ENCODE measurements at regions of chr19 and their contacts with region 1.

Region 1: GRCh38 chr19:39125554-39126311 is at the start of gene PAK4:
- DNase-seq: peak; percentile 94 to 97 (median 96)
- H3K4me3 ChIP-seq: peak within 1 kb of the TSS; percentile 64 to 94 (median 87)
- H3K4me3 Mint-ChIP-seq: peak within 1 kb of the TSS; percentile 95 to 98
- H3K27ac ChIP-seq: peak within 1 kb of the TSS; percentile 44 to 62
- H3K27ac Mint-ChIP-seq: peak within 1 kb of the TSS; percentile 87 to 96 (median 95)
- H3K4me1 ChIP-seq: peaks cover 12 to 13% of the 10 kb centered on the region in 2 donors
- H3K4me1 Mint-ChIP-seq: peaks cover 29% of the 10 kb centered on the region
- H3K27me3 ChIP-seq: peaks cover 0 to 4% of the 10 kb centered on the region in 2 donors
- H3K27me3 Mint-ChIP-seq: peaks cover 0 to 5% (median 5%) of the 10 kb centered on the region in 3 donors
- CTCF ChIP-seq: no peak
- polyA plus RNA-seq, gene PAK4: 1.3 to 11.3 (median 1.5) TPM

Region 2: GRCh38 chr19:38838573-38839269 is 287.0 kb before region 1 on chr19:
- intact Hi-C with region 1: no loop called
- DNase-seq: no peak
- H3K4me3 ChIP-seq: no peak overlapping the region
- H3K4me3 Mint-ChIP-seq: no peak overlapping the region
- H3K27ac ChIP-seq: peak overlapping the region in 1 of 2 donors; percentile 3
- H3K27ac Mint-ChIP-seq: peak overlapping the region; percentile 35 to 77 (median 51)
- H3K4me1 ChIP-seq: no peaks in the 10 kb centered on the region
- H3K4me1 Mint-ChIP-seq: no peaks in the 10 kb centered on the region
- H3K27me3 ChIP-seq: no peaks in the 10 kb centered on the region
- H3K27me3 Mint-ChIP-seq: peaks cover 0 to 2% (median 0%) of the 10 kb centered on the region in 3 donors
- CTCF ChIP-seq: no peak

Region 3: DNA sequence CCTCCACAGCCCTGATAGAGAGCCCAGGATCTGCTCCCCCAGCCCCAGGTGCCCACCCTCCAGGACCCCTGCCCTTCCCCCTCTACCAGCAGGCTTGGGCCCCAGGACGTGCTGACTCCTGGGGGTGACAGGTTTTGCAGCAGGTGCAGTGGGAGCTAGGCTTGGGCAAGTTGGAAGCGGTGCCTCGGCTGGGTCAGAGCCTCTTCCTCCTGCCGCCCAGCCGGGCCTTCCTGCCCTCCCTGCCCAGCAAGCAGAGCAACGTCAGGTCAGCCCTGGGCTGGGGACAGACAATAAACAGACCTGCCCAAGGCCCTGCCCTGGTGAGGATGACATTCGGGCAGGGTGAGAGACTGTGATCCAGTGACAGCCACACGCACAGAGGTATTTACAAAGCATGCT is 61.8 kb after region 1 on chr19:
- intact Hi-C with region 1: loop called (anchors 2 to 5 kb)
- DNase-seq: no peak
- H3K4me3 ChIP-seq: no peak overlapping the region
- H3K4me3 Mint-ChIP-seq: no peak overlapping the region
- H3K27ac ChIP-seq: no peak overlapping the region
- H3K27ac Mint-ChIP-seq: peak overlapping the region in 1 of 7 donors; percentile 48
- H3K4me1 ChIP-seq: no peaks in the 10 kb centered on the region
- H3K4me1 Mint-ChIP-seq: no peaks in the 10 kb centered on the region
- H3K27me3 ChIP-seq: no peaks in the 10 kb centered on the region
- H3K27me3 Mint-ChIP-seq: peaks cover 4 to 15% (median 10%) of the 10 kb centered on the region in 3 donors
- CTCF ChIP-seq: peak; percentile 59

Region 4: DNA sequence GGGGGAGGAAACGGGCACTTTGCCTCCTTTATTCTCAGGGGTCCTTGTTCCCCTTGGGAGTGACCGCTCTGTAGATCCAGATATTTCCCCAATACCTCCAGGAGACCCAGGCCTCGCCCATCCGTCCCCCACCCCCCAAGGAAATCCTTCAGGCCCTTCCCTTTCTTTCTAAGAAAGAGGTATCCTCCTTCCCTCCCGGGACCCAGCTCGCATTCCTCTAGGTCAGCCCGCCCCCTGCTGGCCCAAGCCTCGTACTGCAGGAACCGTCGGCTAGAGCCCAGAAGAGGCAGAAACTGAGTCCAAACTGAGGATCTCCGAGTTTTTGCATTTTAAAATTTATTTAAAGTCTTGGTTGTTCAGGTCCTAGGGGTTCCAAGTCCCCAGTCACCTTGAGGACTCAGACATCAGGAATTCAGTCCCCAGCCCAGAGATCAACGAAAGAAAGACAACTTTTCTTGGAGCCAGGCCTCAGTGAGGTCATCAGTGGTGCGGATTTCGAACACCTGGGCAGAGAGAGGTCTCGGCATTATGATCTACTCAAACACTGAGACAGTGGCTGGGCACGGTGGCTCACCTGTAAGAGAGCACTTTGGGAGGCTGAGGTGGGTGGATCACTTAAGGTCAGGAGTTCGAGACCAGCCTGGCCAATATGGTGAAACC is 202.4 kb after region 1 on chr19:
- intact Hi-C with region 1: loop called in 1 of 2 experiments (anchors 5 kb)
- DNase-seq: peak; percentile 48 to 62 (median 59)
- H3K4me3 ChIP-seq: no peak overlapping the region
- H3K4me3 Mint-ChIP-seq: no peak overlapping the region
- H3K27ac ChIP-seq: peak overlapping the region in 1 of 2 donors; percentile 62
- H3K27ac Mint-ChIP-seq: peak overlapping the region in 5 of 7 donors; percentile 49 to 87 (median 76)
- H3K4me1 ChIP-seq: peaks cover 12 to 43% of the 10 kb centered on the region in 2 donors
- H3K4me1 Mint-ChIP-seq: peaks cover 49% of the 10 kb centered on the region
- H3K27me3 ChIP-seq: no peaks in the 10 kb centered on the region
- H3K27me3 Mint-ChIP-seq: peaks cover 0 to 1% (median 0%) of the 10 kb centered on the region in 3 donors
- CTCF ChIP-seq: peak; percentile 95

Region 5: GRCh38 chr19:39539519-39540332 is 414.0 kb after region 1 on chr19 and contains the start of gene EID2:
- intact Hi-C with region 1: loop called in 1 of 2 experiments (anchors 5 kb)
- DNase-seq: peak; percentile 95 to 96 (median 95)
- H3K4me3 ChIP-seq: peak within 1 kb of the TSS; percentile 72 to 90 (median 79)
- H3K4me3 Mint-ChIP-seq: peak within 1 kb of the TSS; percentile 96
- H3K27ac ChIP-seq: peak within 1 kb of the TSS; percentile 83 to 87
- H3K27ac Mint-ChIP-seq: peak within 1 kb of the TSS; percentile 89 to 98 (median 95)
- H3K4me1 ChIP-seq: peaks cover 12 to 18% of the 10 kb centered on the region in 2 donors
- H3K4me1 Mint-ChIP-seq: peaks cover 25% of the 10 kb centered on the region
- H3K27me3 ChIP-seq: no peaks in the 10 kb centered on the region
- H3K27me3 Mint-ChIP-seq: peaks cover 0 to 12% (median 4%) of the 10 kb centered on the region in 3 donors
- CTCF ChIP-seq: peak; percentile 86
- polyA plus RNA-seq, gene EID2: 5.8 to 20.4 (median 12.5) TPM

Measured in CD14-positive monocyte (primary cell).